ENCODE measurements at regions of chr9 and their contacts with region 1.

Region 1: GRCh38 chr9:34522971-34523797 is at the start of gene ENHO:
- DNase-seq: peak; percentile 79 to 96 (median 87)
- ATAC-seq: peak; percentile 97
- H3K4me3 ChIP-seq: peak within 1 kb of the TSS; percentile 48 to 70
- H3K4me3 Mint-ChIP-seq: peak within 1 kb of the TSS; percentile 83
- H3K27ac ChIP-seq: peak within 1 kb of the TSS in 1 of 2 experiments; percentile 33
- H3K27ac Mint-ChIP-seq: no peak within 1 kb of the TSS
- H3K4me1 ChIP-seq: peaks cover 9% of the 10 kb centered on the region
- H3K4me1 Mint-ChIP-seq: peaks cover 4% of the 10 kb centered on the region
- H3K27me3 ChIP-seq: no peaks in the 10 kb centered on the region
- H3K27me3 Mint-ChIP-seq: peaks cover 2% of the 10 kb centered on the region
- CTCF ChIP-seq: no peak
- total RNA-seq, gene ENHO: not detected

Region 2: GRCh38 chr9:34126207-34127034 is 396.8 kb before region 1 on chr9 and contains the start of gene DCAF12:
- CTCF ChIA-PET with region 1: no interaction called
- POLR2A ChIA-PET with region 1: no interaction called
- intact Hi-C with region 1: loop called in 1 of 2 experiments (anchors 2 kb)
- DNase-seq: peak; percentile 82 to 96 (median 90)
- ATAC-seq: peak; percentile 96
- H3K4me3 ChIP-seq: peak within 1 kb of the TSS; percentile 89 to 96
- H3K4me3 Mint-ChIP-seq: peak within 1 kb of the TSS; percentile 98
- H3K27ac ChIP-seq: peak within 1 kb of the TSS; percentile 79 to 92
- H3K27ac Mint-ChIP-seq: peak within 1 kb of the TSS; percentile 97
- H3K4me1 ChIP-seq: peaks cover 39% of the 10 kb centered on the region
- H3K4me1 Mint-ChIP-seq: peaks cover 49% of the 10 kb centered on the region
- H3K27me3 ChIP-seq: no peaks in the 10 kb centered on the region
- H3K27me3 Mint-ChIP-seq: no peaks in the 10 kb centered on the region
- CTCF ChIP-seq: no peak
- total RNA-seq, gene DCAF12: 4.0 to 4.1 TPM

Region 3: DNA sequence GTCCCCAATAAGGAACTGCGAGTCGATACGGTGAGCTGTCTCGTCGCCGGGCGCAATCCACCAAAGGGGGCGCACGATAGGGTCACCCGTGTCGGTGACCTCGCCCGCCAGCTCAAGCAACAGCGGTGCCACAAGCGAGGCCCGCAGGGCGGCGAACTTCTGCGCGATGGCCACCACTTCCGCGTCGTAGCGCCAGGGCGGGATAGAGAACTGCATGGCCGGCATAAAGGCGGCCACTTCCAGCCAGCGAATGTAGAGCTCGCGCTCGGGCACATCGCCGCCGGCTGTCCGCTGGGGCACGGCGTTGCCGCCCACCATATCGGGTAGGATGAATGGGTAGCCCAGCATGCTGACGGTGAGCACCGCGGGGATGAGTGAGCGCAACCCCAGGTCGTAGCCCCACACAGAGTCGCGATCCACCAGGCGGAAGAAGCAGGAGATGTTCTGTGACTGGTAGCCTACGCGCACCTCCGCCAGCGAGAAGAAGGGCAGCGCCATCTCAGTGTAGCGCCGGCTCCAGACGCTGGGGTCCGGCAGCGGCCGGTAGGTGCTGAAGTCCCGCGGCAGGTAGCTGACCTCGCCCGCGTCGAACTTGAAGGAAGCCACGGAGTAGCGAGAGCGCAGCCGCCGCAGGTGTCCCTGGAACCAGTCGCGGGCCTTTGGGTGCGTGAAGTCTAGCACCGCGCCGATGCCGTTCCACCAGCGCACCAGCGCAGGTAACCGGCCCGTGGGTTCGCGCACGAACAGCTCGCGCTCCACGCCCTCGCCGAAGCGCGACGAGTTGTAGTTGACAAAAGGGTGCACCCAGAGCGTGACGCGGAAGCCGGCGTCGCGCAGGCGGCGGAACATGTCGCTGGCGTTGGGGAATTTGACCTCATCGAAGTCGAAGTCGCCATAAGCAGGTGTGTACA is 152.0 kb before region 1 on chr9:
- CTCF ChIA-PET with region 1: no interaction called
- POLR2A ChIA-PET with region 1: no interaction called
- intact Hi-C with region 1: no loop called
- DNase-seq: peak in 3 of 9 experiments; percentile 32 to 33 (median 32)
- ATAC-seq: peak; percentile 44
- H3K4me3 ChIP-seq: no peak overlapping the region
- H3K4me3 Mint-ChIP-seq: peak overlapping the region; percentile 11
- H3K27ac ChIP-seq: no peak overlapping the region
- H3K27ac Mint-ChIP-seq: no peak overlapping the region
- H3K4me1 ChIP-seq: peaks cover 10% of the 10 kb centered on the region
- H3K4me1 Mint-ChIP-seq: peaks cover 11% of the 10 kb centered on the region
- H3K27me3 ChIP-seq: no peaks in the 10 kb centered on the region
- H3K27me3 Mint-ChIP-seq: no peaks in the 10 kb centered on the region
- CTCF ChIP-seq: no peak

Region 4: DNA sequence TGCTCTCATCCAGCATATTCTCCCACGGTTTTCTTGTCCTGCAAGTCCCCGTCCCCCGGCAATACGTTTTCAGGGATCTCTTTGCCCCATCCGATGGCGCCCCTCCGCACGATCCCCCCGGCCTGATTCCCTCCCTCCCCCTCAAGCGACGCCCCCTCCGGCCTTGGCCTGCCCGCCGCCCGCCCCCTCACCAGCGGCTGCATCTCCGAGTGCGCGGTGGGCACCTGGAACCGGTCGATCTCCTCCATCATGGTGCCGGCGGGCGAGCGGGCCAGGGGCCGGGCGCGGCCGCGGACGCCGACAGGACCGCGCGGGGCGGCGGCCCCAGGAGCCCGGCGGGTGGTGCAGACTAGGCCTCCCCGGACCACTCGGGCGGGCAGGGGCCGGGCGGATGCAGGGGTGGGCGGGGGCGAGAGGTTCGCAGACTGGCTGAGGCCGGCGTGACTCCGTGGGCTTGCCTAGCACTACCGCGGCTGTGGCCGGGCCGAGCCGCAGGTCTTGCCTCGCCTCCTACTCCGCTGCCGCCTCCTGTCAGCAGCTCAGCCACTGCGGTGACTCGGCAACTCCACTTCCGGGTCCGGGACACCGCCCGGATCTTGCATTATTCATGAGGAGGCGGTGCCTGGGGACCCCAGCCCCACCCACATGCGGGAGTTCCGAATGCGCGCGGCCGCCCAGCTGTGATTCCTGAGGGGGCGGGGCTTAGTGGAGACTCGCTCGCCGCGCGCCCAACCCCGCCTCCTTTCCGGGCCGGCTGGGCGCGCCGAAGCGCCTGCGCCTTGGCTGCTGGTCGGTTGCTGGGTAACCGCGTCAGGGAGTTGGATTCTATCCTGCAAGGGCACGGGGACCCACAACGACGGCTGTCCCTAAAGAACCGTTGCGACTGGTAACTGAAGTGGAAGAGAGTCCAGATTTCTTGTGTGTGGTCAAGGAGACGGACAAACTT is 64.9 kb before region 1 on chr9 and contains the starts of genes DNAI1 and FAM219A:
- CTCF ChIA-PET with region 1: no interaction called
- POLR2A ChIA-PET with region 1: no interaction called
- intact Hi-C with region 1: loop called (anchors 1 kb)
- DNase-seq: peak; percentile 98 to 99 (median 99)
- ATAC-seq: peak; percentile 96
- H3K4me3 ChIP-seq: peak within 1 kb of the TSS; percentile 61 to 67
- H3K4me3 Mint-ChIP-seq: peak within 1 kb of the TSS; percentile 91
- H3K27ac ChIP-seq: peak within 1 kb of the TSS in 1 of 2 experiments; percentile 29
- H3K27ac Mint-ChIP-seq: peak within 1 kb of the TSS; percentile 46
- H3K4me1 ChIP-seq: peaks cover 14% of the 10 kb centered on the region
- H3K4me1 Mint-ChIP-seq: peaks cover 30% of the 10 kb centered on the region
- H3K27me3 ChIP-seq: no peaks in the 10 kb centered on the region
- H3K27me3 Mint-ChIP-seq: no peaks in the 10 kb centered on the region
- CTCF ChIP-seq: no peak
- total RNA-seq, gene DNAI1: not detected
- total RNA-seq, gene FAM219A: 5.5 to 5.9 TPM

Region 5: DNA sequence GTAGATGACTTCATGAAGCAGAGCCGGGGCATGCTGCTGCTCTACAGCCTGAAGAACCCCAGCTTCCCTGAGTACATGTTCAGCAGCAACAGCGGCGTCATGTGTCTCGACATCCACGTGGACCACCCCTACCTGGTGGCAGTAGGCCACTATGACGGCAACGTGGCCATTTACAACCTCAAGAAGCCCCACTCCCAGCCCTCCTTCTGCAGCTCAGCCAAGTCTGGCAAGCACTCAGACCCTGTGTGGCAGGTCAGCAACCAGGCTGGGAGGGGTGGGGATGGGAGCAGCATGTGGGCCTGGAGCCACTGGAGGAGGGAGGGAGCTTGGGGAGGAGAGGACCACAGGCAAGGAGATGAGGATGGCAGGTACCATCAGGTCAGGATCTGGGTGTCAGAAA is 16.6 kb before region 1 on chr9:
- CTCF ChIA-PET with region 1: no interaction called
- POLR2A ChIA-PET with region 1: no interaction called
- intact Hi-C with region 1: no loop called
- DNase-seq: no peak
- ATAC-seq: no peak
- H3K4me3 ChIP-seq: no peak overlapping the region
- H3K4me3 Mint-ChIP-seq: no peak overlapping the region
- H3K27ac ChIP-seq: no peak overlapping the region
- H3K27ac Mint-ChIP-seq: no peak overlapping the region
- H3K4me1 ChIP-seq: no peaks in the 10 kb centered on the region
- H3K4me1 Mint-ChIP-seq: no peaks in the 10 kb centered on the region
- H3K27me3 ChIP-seq: no peaks in the 10 kb centered on the region
- H3K27me3 Mint-ChIP-seq: peaks cover 2% of the 10 kb centered on the region
- CTCF ChIP-seq: no peak

Region 6: GRCh38 chr9:34591248-34591916 is 68.2 kb after region 1 on chr9:
- CTCF ChIA-PET with region 1: no interaction called
- POLR2A ChIA-PET with region 1: no interaction called
- intact Hi-C with region 1: loop called in 1 of 2 experiments (anchors 5 kb)
- DNase-seq: peak; percentile 59 to 86 (median 80)
- ATAC-seq: peak; percentile 83
- H3K4me3 ChIP-seq: peak overlapping the region; percentile 54 to 73
- H3K4me3 Mint-ChIP-seq: peak overlapping the region; percentile 78
- H3K27ac ChIP-seq: no peak overlapping the region
- H3K27ac Mint-ChIP-seq: no peak overlapping the region
- H3K4me1 ChIP-seq: peaks cover 9% of the 10 kb centered on the region
- H3K4me1 Mint-ChIP-seq: peaks cover 32% of the 10 kb centered on the region
- H3K27me3 ChIP-seq: peaks cover 26 to 47% of the 10 kb centered on the region in 2 experiments
- H3K27me3 Mint-ChIP-seq: peaks cover 70% of the 10 kb centered on the region
- CTCF ChIP-seq: peak; percentile 74

Region 7: GRCh38 chr9:34611829-34612630 is 88.8 kb after region 1 on chr9 and contains the start of gene RPP25L:
- CTCF ChIA-PET with region 1: interaction called, 4 read pairs
- POLR2A ChIA-PET with region 1: no interaction called
- intact Hi-C with region 1: loop called (anchors 1 kb)
- DNase-seq: peak; percentile 65 to 92 (median 85)
- ATAC-seq: peak; percentile 95
- H3K4me3 ChIP-seq: peak within 1 kb of the TSS; percentile 88 to 93
- H3K4me3 Mint-ChIP-seq: peak within 1 kb of the TSS; percentile 85
- H3K27ac ChIP-seq: peak within 1 kb of the TSS; percentile 77 to 91
- H3K27ac Mint-ChIP-seq: peak within 1 kb of the TSS; percentile 91
- H3K4me1 ChIP-seq: peaks cover 17% of the 10 kb centered on the region
- H3K4me1 Mint-ChIP-seq: peaks cover 23% of the 10 kb centered on the region
- H3K27me3 ChIP-seq: no peaks in the 10 kb centered on the region
- H3K27me3 Mint-ChIP-seq: no peaks in the 10 kb centered on the region
- CTCF ChIP-seq: no peak
- total RNA-seq, gene RPP25L: 4.4 to 5.1 TPM

Region 8: GRCh38 chr9:34646211-34647083 is 123.3 kb after region 1 on chr9 and contains the start of gene GALT:
- CTCF ChIA-PET with region 1: interaction called, 4 read pairs
- POLR2A ChIA-PET with region 1: no interaction called
- intact Hi-C with region 1: loop called in 1 of 2 experiments (anchors 1 kb)
- DNase-seq: peak; percentile 90 to 98 (median 97)
- ATAC-seq: peak; percentile 90
- H3K4me3 ChIP-seq: peak within 1 kb of the TSS; percentile 89 to 99
- H3K4me3 Mint-ChIP-seq: peak within 1 kb of the TSS; percentile 95
- H3K27ac ChIP-seq: peak within 1 kb of the TSS; percentile 69 to 80
- H3K27ac Mint-ChIP-seq: peak within 1 kb of the TSS; percentile 89
- H3K4me1 ChIP-seq: peaks cover 27% of the 10 kb centered on the region
- H3K4me1 Mint-ChIP-seq: peaks cover 31% of the 10 kb centered on the region
- H3K27me3 ChIP-seq: no peaks in the 10 kb centered on the region
- H3K27me3 Mint-ChIP-seq: no peaks in the 10 kb centered on the region
- CTCF ChIP-seq: peak; percentile 58
- total RNA-seq, gene GALT: 64.7 to 68.4 TPM